IMR-90 (cell line): ENCODE measurements at regions of chr12 and their contacts with region 1.

Region 1: DNA sequence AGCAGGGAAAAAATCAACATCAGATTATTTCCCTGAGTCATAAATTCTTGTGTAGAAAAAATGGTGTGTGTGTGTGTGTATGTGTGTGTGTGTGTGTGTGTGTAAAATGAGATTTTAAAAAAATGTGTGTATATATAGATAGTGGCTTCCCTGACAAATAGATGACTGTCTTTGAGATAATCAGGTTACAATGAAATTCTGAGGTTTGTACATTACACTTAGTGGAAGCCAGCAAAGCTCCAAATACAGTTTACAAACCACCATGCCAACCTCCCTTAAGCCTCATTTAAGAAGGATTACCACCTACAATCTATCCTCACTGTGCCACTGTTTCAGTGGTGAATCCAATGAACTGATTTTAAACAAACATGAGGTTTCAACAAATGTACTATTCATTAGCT is 93.8 kb downstream of the MED13L start:
- DNase-seq: peak; percentile 47
- ATAC-seq: peak; percentile 48
- H3K4me3 ChIP-seq: no peak overlapping the region
- H3K27ac ChIP-seq: no peak overlapping the region
- H3K4me1 ChIP-seq: peaks cover 6% of the 10 kb centered on the region
- H3K27me3 ChIP-seq: no peaks in the 10 kb centered on the region
- CTCF ChIP-seq: no peak
- POLR2A ChIP-seq: no peak
- RAD21 ChIP-seq: no peak

Region 2: DNA sequence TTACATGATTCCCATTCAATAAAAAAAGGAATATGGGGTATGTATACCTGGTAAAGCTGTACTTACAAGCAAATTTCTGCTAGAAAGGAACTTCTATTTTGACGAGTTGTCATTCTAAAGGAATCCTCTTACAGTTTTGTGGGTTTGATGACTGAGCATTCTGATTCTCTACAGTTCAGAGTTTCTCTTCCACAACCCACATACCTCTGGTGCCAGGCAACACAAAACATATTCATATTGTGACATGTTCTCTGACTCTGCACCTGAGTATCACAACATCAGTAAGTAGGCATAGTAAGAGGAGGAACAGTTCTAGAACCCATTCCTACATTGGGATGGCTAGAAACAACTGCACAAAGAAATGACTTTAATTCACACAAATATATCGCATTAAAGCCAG is 542.8 kb before region 1 on chr12:
- CTCF ChIA-PET with region 1: no interaction called
- POLR2A ChIA-PET with region 1: no interaction called
- dilution Hi-C with region 1: no loop called
- in situ Hi-C with region 1: no loop called
- intact Hi-C with region 1: no loop called
- DNase-seq: peak; percentile 17
- ATAC-seq: no peak
- H3K4me3 ChIP-seq: no peak overlapping the region
- H3K27ac ChIP-seq: no peak overlapping the region
- H3K4me1 ChIP-seq: no peaks in the 10 kb centered on the region
- H3K27me3 ChIP-seq: no peaks in the 10 kb centered on the region; the same call in none of the 2 replicates
- CTCF ChIP-seq: no peak
- POLR2A ChIP-seq: no peak
- RAD21 ChIP-seq: no peak

Region 3: DNA sequence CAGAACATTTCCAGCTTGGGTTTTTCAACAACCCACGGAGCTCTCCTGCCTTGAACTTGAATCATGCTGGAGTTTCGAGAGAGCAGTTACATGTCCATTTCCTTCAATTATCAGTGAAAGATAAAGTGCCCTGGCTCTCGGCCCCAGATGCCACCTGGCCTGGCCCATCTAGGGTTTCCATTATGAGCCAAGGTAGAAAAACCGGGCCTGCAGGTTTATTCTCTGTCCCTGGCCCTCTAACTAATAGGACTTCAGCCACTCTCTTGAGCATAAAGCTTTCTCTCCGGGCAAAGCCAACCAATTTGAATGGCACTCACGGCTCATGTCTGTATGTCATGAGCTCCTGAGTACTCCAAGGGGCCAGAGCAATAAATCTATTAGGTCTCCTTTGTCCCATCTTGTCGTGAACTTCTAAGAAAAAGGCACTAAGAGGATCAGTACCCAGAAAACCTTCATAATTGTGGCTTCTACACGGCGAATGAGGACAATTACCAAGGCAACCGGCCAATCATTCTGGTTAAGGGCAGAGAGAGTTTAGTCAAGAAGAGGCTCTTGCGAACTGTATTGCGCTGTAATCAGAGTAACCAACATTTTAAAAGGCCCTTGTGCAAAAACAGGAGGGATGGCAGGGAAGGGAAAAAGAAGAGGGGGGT is 298.6 kb before region 1 on chr12:
- CTCF ChIA-PET with region 1: no interaction called
- POLR2A ChIA-PET with region 1: no interaction called
- dilution Hi-C with region 1: no loop called
- in situ Hi-C with region 1: no loop called
- intact Hi-C with region 1: no loop called
- DNase-seq: no peak
- ATAC-seq: no peak
- H3K4me3 ChIP-seq: no peak overlapping the region
- H3K27ac ChIP-seq: no peak overlapping the region
- H3K4me1 ChIP-seq: no peaks in the 10 kb centered on the region
- H3K27me3 ChIP-seq: peaks cover 3% of the 10 kb centered on the region
- CTCF ChIP-seq: no peak
- POLR2A ChIP-seq: no peak
- RAD21 ChIP-seq: no peak

Region 4: DNA sequence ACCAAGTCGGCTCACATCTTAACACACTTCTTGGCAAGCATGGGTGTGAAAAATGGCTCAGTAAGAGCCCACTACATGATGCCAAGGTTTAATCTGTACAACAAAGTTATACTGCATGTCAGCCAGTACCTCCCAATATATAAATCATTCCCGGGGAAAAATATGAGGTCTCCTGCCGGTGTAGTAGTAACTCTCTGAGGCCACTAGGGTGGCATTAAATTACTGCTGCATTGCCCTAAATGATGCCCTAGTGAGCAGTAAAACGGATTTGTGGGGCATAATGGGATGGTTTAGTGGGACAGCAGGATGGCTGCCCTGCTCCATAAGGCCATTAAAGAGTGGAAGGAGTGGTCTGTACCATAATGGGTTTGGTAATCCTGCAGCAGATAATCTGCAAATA is 173.9 kb before region 1 on chr12:
- CTCF ChIA-PET with region 1: no interaction called
- POLR2A ChIA-PET with region 1: no interaction called
- dilution Hi-C with region 1: no loop called
- in situ Hi-C with region 1: no loop called
- intact Hi-C with region 1: no loop called
- DNase-seq: no peak
- ATAC-seq: no peak
- H3K4me3 ChIP-seq: no peak overlapping the region
- H3K27ac ChIP-seq: no peak overlapping the region
- H3K4me1 ChIP-seq: no peaks in the 10 kb centered on the region
- H3K27me3 ChIP-seq: no peaks in the 10 kb centered on the region
- CTCF ChIP-seq: peak; percentile 18; the same call in 1 of the 2 replicates
- POLR2A ChIP-seq: no peak
- RAD21 ChIP-seq: no peak

Region 5: DNA sequence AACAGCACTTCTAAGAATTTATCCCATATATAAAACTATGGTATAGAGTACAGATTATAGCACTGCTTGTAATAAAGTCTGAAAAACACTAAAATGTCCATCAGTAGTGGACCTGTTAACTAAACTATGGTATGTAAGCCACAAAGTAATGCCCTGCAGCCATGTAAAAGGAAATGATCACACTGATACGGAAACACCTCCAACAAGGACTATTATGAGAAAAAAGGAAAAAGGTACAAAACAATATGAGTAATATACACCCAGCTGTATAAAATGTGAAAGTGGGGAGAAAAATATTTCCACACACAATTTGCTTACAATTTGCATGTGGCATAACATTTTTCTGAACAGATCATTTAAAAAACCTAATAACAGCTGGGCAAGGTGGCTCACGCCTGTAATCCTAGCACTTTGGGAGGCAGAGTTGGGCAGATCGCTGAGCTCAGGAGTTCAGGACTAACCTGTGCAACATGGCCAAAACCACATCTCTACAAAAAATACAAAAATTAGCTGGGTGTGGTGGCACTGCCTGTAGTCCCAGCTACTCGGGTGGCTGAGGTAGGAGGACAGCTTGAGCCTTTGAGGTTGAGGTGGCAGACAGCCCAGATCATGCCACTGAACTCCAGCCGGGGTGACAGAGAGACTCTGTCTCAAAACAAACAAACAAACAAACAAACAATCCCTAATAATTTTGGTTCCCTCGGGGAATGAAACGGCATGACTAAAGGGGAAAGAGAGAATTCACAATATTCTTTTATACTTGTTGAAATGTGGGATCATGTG is 156.8 kb before region 1 on chr12:
- CTCF ChIA-PET with region 1: no interaction called
- POLR2A ChIA-PET with region 1: no interaction called
- dilution Hi-C with region 1: no loop called
- in situ Hi-C with region 1: no loop called
- intact Hi-C with region 1: loop called (anchors 5 kb)
- DNase-seq: no peak
- ATAC-seq: no peak
- H3K4me3 ChIP-seq: no peak overlapping the region
- H3K27ac ChIP-seq: no peak overlapping the region
- H3K4me1 ChIP-seq: no peaks in the 10 kb centered on the region
- H3K27me3 ChIP-seq: no peaks in the 10 kb centered on the region
- CTCF ChIP-seq: no peak
- POLR2A ChIP-seq: no peak
- RAD21 ChIP-seq: no peak

Region 6: GRCh38 chr12:116152268-116152667 is 31.5 kb before region 1 on chr12:
- CTCF ChIA-PET with region 1: no interaction called
- POLR2A ChIA-PET with region 1: no interaction called
- dilution Hi-C with region 1: no loop called
- in situ Hi-C with region 1: no loop called
- intact Hi-C with region 1: loop called (anchors 5 kb)
- DNase-seq: peak; percentile 92
- ATAC-seq: peak; percentile 92
- H3K4me3 ChIP-seq: no peak overlapping the region
- H3K27ac ChIP-seq: no peak overlapping the region
- H3K4me1 ChIP-seq: peaks cover 10% of the 10 kb centered on the region
- H3K27me3 ChIP-seq: no peaks in the 10 kb centered on the region
- CTCF ChIP-seq: no peak
- POLR2A ChIP-seq: no peak
- RAD21 ChIP-seq: no peak

Region 7: DNA sequence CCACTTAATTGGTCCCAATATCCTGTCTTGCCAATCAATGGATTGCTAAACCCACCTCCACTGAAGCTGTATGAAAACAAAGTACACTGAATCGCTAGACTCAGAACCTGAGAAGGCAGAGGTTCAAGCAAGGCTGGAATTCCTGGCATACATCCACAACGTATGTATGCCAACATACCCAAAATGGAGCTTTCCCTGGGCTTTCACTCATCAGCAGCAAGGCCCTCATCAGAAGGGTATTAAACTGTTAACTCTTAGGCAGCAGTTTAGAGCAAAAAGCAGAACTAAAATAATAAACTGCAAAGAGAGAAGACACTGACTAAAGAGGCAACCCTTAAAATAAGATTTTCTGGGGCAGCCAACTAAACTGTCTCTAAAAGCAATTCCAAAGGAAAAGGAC is 80.1 kb after region 1 on chr12:
- CTCF ChIA-PET with region 1: no interaction called
- POLR2A ChIA-PET with region 1: no interaction called
- dilution Hi-C with region 1: no loop called
- in situ Hi-C with region 1: no loop called
- intact Hi-C with region 1: loop called (anchors 5 kb)
- DNase-seq: no peak
- ATAC-seq: no peak
- H3K4me3 ChIP-seq: no peak overlapping the region
- H3K27ac ChIP-seq: no peak overlapping the region
- H3K4me1 ChIP-seq: peaks cover 22% of the 10 kb centered on the region
- H3K27me3 ChIP-seq: no peaks in the 10 kb centered on the region
- CTCF ChIP-seq: no peak
- POLR2A ChIP-seq: no peak
- RAD21 ChIP-seq: no peak